K562 (cell line): ENCODE measurements at regions of chr15 and their contacts with region 1.

Region 1: DNA sequence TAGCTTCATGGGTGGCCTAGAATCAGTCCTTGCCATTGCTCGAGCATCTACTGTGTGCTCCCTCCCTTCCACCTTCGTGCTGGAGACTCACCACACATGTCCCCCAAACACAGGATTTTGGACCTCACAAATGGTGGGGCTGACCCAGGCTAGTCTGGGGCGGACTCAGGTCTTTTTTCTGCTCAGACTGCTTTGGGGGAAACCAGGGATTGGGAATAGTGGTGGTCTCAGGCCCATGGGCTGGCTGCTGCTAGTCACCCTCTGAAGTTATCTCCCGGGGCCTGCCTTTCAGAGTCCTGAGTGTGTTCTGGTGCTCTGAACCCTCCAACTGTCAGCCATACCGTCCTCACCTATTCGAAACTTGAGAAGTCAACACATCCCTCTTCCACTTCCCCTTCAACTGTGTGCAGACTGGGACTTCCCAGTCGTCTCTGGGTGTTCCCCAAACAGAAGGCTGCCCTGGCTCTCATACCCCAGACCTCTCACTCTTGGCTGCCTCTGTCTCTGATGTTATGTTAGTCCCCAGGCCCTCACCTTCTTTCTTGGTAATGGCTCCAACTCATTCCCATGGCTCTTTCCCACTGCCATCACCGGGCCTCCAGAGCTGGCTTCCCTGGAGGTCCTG is 46.0 kb downstream of the PPCDC start:
- DNase-seq: no peak
- ATAC-seq: no peak
- H3K4me3 ChIP-seq: no peak overlapping the region
- H3K27ac ChIP-seq: no peak overlapping the region
- H3K4me1 ChIP-seq: peaks cover 6 to 22% of the 10 kb centered on the region in 2 experiments; a peak in 4 of 5 replicates
- H3K27me3 ChIP-seq: peaks cover 0 to 17% of the 10 kb centered on the region in 2 experiments; a peak in 2 of 5 replicates
- CTCF ChIP-seq: no peak
- EP300 ChIP-seq: no peak
- POLR2A ChIP-seq: no peak
- RAD21 ChIP-seq: no peak

Region 2: DNA sequence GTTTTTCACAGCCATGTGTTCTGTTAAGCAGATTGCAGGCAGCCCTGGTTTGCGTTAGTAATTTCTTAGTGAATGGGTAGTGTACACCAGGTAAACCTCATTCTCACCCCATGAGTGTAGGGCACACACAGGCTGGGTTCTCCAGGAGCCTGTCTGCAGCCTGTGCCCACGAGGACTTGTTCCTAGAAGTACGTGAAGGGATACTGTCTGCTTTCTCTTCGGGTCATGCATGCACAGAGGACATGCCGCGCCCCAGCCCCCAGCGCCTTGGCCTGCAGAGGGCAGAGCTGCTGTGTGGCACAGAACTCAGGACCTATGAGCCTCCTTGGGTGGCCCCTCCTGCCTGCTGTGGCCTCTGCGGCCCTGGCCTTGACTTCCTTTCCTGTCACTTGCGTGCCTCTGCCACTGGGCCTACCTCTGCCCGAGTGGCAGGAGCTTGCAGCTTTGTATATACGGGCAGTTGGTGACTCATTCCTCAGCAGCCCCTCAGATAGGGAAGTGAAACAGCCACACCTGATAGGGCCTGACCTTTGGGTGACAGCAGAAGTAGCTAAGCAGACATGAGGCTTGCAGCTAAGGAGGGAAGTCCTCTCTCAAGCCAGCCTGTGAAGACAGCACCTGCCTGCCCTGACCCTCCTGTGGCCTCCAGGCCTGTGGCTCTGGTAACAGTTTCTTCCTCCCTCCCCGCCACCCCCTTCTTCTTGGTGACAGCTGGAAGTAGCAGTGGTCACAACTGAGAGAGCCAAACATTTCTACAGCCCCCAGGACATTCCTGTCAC is 26.5 kb before region 1 on chr15:
- CTCF ChIA-PET with region 1: no interaction called
- POLR2A ChIA-PET with region 1: interaction called, 11 read pairs
- in situ Hi-C with region 1: no loop called
- intact Hi-C with region 1: loop called (anchors 1 kb)
- DNase-seq: peak; percentile 68 to 86 (median 72)
- ATAC-seq: peak; percentile 66
- H3K4me3 ChIP-seq: no peak overlapping the region; the same call in 1 of the 2 replicates
- H3K27ac ChIP-seq: peak overlapping the region; percentile 91
- H3K4me1 ChIP-seq: peaks cover 53 to 57% of the 10 kb centered on the region in 2 experiments
- H3K27me3 ChIP-seq: no peaks in the 10 kb centered on the region
- CTCF ChIP-seq: peak; percentile 41 to 55 (median 55); a peak in 5 of 6 replicates
- EP300 ChIP-seq: peak; percentile 80
- POLR2A ChIP-seq: no peak
- RAD21 ChIP-seq: peak in 1 of 2 experiments; percentile 63; a peak in 3 of 4 replicates

Region 3: DNA sequence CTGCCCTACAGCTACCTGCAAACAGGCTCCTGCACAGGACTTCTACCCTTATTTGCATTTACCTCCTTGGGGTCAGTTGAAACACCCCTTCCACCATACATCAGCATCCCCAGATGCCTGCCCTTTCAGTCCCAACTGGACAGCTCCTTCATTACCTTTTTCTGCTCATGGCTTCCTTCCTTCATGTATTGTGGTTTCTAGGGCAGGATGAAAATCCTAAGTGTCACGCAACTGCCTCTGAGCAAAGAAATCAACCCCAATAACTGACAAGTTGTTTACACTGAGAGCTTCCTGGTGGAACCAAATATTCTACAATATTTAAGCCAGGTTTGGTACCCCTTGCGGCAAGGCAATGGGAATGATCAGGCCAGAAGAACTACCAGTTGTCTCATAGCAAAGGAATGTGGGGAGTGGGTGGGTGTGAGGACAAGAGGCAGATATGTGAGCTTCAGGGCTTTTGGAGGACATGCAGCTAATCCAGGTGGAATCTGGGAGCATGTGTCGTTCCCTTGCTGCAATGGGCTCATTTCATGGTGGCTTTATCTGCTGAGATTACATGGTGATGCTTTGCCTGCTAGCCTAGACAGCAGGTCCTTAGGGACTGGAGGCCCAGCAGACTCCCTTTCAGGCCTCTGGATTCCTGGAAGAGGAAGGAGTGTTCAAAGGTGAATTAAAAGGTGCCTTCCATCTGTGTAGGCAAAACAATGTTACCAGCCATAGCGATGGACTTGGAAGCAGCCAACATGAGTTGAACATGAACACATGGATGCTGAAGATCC is 11.1 kb before region 1 on chr15:
- CTCF ChIA-PET with region 1: no interaction called
- POLR2A ChIA-PET with region 1: interaction called, 16 read pairs
- in situ Hi-C with region 1: no loop called
- intact Hi-C with region 1: no loop called
- DNase-seq: no peak
- ATAC-seq: no peak
- H3K4me3 ChIP-seq: no peak overlapping the region
- H3K27ac ChIP-seq: no peak overlapping the region
- H3K4me1 ChIP-seq: peaks cover 0 to 15% of the 10 kb centered on the region in 2 experiments; a peak in 4 of 5 replicates
- H3K27me3 ChIP-seq: no peaks in the 10 kb centered on the region
- CTCF ChIP-seq: no peak
- EP300 ChIP-seq: no peak
- POLR2A ChIP-seq: no peak
- RAD21 ChIP-seq: no peak

Region 4: DNA sequence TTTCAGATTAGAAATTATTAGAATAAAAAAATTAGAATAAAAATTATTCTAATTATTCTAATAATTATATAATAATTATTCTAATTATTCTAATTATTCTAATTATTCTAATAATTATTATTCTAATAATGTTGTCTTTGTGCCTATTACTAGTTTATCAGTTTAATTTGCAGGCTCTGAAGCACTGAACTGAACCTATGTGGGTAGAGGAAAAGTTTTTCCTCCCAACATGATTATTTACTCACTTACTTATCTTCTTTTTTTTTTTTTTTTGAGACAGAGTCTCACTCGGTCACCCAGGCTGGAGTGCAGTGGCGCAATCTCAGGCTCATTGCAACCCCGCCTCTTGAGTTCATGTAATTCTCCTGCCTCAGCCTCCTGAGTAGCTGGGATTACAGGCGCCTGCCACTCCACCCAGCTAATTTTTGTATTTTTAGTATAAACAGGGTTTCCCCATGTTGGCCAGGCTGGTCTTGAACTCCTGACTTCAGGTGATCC is 92.6 kb after region 1 on chr15:
- CTCF ChIA-PET with region 1: no interaction called
- POLR2A ChIA-PET with region 1: no interaction called
- in situ Hi-C with region 1: no loop called
- intact Hi-C with region 1: loop called (anchors 5 kb)
- DNase-seq: no peak
- ATAC-seq: peak; percentile 21; the same call in 2 of the 3 replicates
- H3K4me3 ChIP-seq: no peak overlapping the region
- H3K27ac ChIP-seq: no peak overlapping the region
- H3K4me1 ChIP-seq: peaks cover 26 to 32% of the 10 kb centered on the region in 2 experiments
- H3K27me3 ChIP-seq: no peaks in the 10 kb centered on the region
- CTCF ChIP-seq: no peak
- EP300 ChIP-seq: no peak
- POLR2A ChIP-seq: no peak
- RAD21 ChIP-seq: no peak